ENCODE measurements at regions of chr10 and their contacts with region 1.

Region 1: GRCh38 chr10:123427392-123427791 is 238.8 kb upstream of the GPR26 start:
- DNase-seq: peak; percentile 41
- H3K4me3 ChIP-seq: no peak overlapping the region
- H3K27ac ChIP-seq: no peak overlapping the region
- H3K4me1 ChIP-seq: no peaks in the 10 kb centered on the region
- H3K27me3 ChIP-seq: peaks cover 77% of the 10 kb centered on the region
- CTCF ChIP-seq: 0 out of 2 replicates have a peak, but pooled peaks have one; percentile 10

Region 2: GRCh38 chr10:123081896-123082295 is 345.5 kb before region 1 on chr10:
- CTCF ChIA-PET with region 1: no interaction called
- POLR2A ChIA-PET with region 1: no interaction called
- intact Hi-C with region 1: no loop called
- DNase-seq: no peak
- H3K4me3 ChIP-seq: no peak overlapping the region
- H3K27ac ChIP-seq: no peak overlapping the region
- H3K4me1 ChIP-seq: no peaks in the 10 kb centered on the region
- H3K27me3 ChIP-seq: no peaks in the 10 kb centered on the region
- CTCF ChIP-seq: no peak

Region 3: DNA sequence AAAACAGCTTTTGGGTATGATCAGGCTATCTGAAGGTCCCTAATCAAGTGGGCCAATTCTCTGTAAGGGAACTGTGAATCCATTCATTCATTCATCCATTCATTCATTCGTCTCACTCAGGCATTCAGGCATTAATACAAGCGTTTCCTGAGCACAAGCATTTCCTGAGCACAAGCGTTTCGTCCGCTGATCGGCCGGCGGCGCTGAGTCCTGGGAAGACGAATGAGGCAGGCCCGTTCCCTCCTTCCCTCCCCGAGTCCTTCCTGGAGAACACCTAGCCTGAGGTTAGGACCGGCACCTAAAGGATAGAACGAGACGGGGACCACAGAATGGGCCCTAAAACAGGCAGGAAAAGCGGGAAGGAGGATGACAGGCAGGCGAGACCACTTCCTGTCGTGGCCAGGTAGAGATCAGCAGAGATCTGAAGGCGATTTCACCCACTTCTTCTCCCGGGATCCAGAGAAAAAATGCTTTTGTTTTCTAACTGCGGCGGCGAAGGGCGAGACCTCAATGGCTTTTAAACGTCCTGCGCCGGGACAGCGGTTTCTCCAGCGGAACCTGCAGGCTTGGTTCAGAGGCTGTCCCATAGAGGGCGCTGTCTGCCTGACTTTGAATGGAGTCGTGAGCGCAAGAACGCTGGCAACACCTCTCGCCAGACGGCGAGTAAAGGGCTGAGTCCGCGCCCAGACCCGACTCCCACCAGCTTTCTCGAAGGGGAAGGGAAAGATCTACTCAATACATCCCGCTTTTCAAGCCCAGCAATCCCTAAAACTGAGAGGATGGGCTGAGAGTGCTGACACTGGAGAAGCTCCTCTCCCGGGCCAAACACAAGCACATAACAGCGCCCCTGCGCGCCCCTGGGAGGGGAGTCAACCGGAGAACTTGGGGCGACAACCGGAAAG is 294.6 kb before region 1 on chr10:
- CTCF ChIA-PET with region 1: interaction called, 3 read pairs
- POLR2A ChIA-PET with region 1: no interaction called
- intact Hi-C with region 1: loop called (anchors 5 kb)
- DNase-seq: peak; percentile 89
- H3K4me3 ChIP-seq: no peak overlapping the region
- H3K27ac ChIP-seq: no peak overlapping the region
- H3K4me1 ChIP-seq: peaks cover 29% of the 10 kb centered on the region
- H3K27me3 ChIP-seq: peaks cover 99% of the 10 kb centered on the region
- CTCF ChIP-seq: peak; percentile 95